ENCODE measurements at regions of chr11 and their contacts with region 1.

Region 1: GRCh38 chr11:33687733-33688479 is 12.7 kb downstream of the C11orf91 start:
- DNase-seq: peak; percentile 41
- ATAC-seq: peak; percentile 70
- H3K4me3 Mint-ChIP-seq: no peak overlapping the region
- H3K27ac Mint-ChIP-seq: no peak overlapping the region
- H3K4me1 Mint-ChIP-seq: peaks cover 16% of the 10 kb centered on the region
- H3K27me3 Mint-ChIP-seq: peaks cover 11% of the 10 kb centered on the region

Region 2: GRCh38 chr11:33168709-33169200 is 519.2 kb before region 1 on chr11:
- CTCF ChIA-PET with region 1: no interaction called
- POLR2A ChIA-PET with region 1: no interaction called
- intact Hi-C with region 1: loop called in 1 of 2 experiments (anchors 5 kb)
- DNase-seq: no peak
- ATAC-seq: no peak
- H3K4me3 Mint-ChIP-seq: no peak overlapping the region
- H3K27ac Mint-ChIP-seq: no peak overlapping the region
- H3K4me1 Mint-ChIP-seq: no peaks in the 10 kb centered on the region
- H3K27me3 Mint-ChIP-seq: no peaks in the 10 kb centered on the region

Region 3: DNA sequence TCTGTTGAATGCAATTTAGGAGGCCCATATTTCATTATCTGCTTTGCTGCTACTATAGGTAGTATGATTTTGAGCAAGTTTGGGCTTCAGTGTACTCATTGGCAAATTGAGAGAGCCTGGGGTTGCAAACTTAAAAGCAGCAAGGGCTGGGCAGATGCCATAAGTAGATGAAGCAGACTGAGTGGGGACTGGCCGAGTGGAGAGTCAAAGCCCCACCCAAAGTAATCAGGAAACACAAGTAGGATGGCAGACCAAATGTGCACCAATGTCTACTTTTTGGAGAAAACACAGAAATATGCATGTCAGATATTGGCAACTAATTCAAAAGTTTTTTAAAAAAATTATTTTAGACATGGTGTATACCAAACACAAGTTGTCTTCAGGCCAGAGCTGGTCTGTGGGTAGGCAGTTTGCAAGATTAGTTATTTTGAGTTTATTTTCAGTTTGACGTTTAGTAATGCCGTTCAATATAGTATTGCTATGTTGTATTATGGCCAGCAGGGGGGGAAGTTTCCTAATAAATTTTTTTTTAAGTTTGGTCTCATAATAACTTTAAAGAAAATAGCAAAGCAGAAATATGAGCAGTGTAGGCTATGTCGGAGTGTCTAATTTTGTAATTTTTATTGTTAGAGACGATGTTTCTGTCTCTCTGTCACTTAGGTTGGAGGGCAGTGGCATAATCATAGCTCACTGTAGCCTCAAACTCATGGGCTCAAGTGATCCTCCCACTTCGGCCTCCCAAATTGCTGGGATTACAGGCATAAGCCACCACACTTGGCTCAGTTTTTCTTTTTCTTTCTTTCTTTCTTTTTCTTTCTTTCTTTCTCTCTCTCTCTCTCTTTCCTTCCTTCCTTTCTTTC is 325.6 kb before region 1 on chr11:
- CTCF ChIA-PET with region 1: interaction called, 3 read pairs
- POLR2A ChIA-PET with region 1: no interaction called
- intact Hi-C with region 1: loop called (anchors 1 to 2 kb)
- DNase-seq: no peak
- ATAC-seq: peak; percentile 47
- H3K4me3 Mint-ChIP-seq: no peak overlapping the region
- H3K27ac Mint-ChIP-seq: no peak overlapping the region
- H3K4me1 Mint-ChIP-seq: no peaks in the 10 kb centered on the region
- H3K27me3 Mint-ChIP-seq: peaks cover 8% of the 10 kb centered on the region

Region 4: GRCh38 chr11:33542921-33543320 is 145.0 kb before region 1 on chr11:
- CTCF ChIA-PET with region 1: interaction called, 5 read pairs
- POLR2A ChIA-PET with region 1: no interaction called
- intact Hi-C with region 1: loop called (anchors 1 to 2 kb)
- DNase-seq: peak; percentile 60
- ATAC-seq: no peak
- H3K4me3 Mint-ChIP-seq: no peak overlapping the region
- H3K27ac Mint-ChIP-seq: no peak overlapping the region
- H3K4me1 Mint-ChIP-seq: no peaks in the 10 kb centered on the region
- H3K27me3 Mint-ChIP-seq: peaks cover 27% of the 10 kb centered on the region

Region 5: DNA sequence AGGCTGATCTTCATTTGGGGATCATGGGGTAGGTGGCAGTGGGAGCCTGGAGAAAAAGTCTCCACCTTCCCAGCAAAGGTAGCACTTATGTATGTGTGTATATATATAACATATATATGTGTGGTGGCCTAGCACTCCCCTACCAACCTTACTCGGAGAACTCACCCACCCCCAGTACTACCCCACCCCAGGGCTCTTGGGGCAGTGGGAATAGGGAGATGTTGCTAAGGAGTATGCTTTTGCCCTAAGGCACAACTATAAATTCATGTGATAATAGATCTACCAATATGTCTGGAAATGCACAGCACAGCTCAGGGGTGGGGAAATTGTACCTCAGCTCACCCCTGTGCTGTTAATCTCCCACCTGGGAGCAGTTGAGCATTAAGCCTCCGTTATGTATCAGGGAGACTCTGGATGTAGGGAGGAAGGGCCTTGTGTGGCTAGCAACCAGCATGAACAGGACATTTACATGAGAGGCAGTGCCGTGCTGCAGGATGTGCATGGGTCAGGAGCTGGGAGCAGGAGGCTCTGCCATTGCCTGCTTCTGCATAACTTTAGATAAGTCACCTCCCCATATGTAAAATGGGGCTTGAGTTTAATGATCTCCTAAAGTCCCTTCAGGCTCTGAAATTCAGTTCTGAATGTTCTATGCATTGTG is 44.6 kb before region 1 on chr11:
- CTCF ChIA-PET with region 1: no interaction called
- POLR2A ChIA-PET with region 1: interaction called, 15 read pairs
- intact Hi-C with region 1: no loop called
- DNase-seq: no peak
- ATAC-seq: no peak
- H3K4me3 Mint-ChIP-seq: no peak overlapping the region
- H3K27ac Mint-ChIP-seq: no peak overlapping the region
- H3K4me1 Mint-ChIP-seq: peaks cover 6% of the 10 kb centered on the region
- H3K27me3 Mint-ChIP-seq: peaks cover 10% of the 10 kb centered on the region

Region 6: DNA sequence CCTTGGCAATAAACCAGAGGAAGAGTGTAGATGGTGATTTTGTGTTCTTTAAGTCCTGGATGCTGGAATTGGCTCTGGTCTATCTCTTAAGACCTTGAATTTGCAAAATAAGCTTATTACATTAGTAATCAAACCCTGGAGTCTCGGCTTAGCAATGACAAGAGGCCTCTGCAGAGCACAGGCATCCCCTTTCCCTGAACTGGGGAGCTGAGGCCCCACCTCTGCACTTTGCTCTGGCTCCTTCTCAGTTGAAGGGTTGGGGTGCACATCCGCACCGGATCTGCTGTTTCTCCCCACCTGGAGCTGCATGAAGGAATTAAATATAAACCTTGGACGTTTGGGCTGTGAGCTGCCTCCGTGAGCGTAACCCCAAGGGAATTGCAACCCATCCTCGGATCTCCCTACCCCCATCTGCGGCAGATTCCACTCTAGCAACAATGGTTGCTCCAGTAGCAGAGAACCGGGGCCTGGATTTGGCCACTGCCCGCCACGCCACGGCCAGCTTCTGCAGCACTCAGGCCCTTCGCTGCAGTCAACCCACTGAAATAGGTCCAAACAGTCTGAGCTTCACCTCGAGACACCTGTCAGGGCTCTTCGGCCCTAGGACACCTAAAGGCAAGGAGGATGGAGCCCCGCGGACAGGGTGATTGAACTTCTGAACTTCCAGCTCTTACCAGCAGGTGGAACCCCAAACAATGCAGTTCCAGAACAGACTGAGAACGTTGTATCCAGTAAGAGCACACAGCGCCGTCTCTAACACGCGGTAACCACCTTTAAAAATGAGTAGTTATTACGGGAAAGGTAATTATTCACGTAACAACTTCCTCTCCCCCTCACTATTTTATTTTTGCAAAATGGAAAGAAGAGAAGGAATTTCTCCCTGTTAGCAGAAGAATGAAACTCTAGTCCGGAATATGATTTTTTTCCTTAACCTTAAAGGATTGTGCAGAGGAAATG is 308.9 kb after region 1 on chr11:
- CTCF ChIA-PET with region 1: no interaction called
- POLR2A ChIA-PET with region 1: no interaction called
- intact Hi-C with region 1: no loop called
- DNase-seq: peak; percentile 84
- ATAC-seq: peak; percentile 99
- H3K4me3 Mint-ChIP-seq: no peak overlapping the region
- H3K27ac Mint-ChIP-seq: no peak overlapping the region
- H3K4me1 Mint-ChIP-seq: peaks cover 9% of the 10 kb centered on the region
- H3K27me3 Mint-ChIP-seq: peaks cover 11% of the 10 kb centered on the region

Measured in activated CD4-positive, alpha-beta T cell treated with anti-CD3 and anti-CD28 coated beads for 36 hours (primary cell).